Mucosa of descending colon (tissue), 3 donors: ENCODE measurements at regions of chr4 and their contacts with region 1.

Region 1: DNA sequence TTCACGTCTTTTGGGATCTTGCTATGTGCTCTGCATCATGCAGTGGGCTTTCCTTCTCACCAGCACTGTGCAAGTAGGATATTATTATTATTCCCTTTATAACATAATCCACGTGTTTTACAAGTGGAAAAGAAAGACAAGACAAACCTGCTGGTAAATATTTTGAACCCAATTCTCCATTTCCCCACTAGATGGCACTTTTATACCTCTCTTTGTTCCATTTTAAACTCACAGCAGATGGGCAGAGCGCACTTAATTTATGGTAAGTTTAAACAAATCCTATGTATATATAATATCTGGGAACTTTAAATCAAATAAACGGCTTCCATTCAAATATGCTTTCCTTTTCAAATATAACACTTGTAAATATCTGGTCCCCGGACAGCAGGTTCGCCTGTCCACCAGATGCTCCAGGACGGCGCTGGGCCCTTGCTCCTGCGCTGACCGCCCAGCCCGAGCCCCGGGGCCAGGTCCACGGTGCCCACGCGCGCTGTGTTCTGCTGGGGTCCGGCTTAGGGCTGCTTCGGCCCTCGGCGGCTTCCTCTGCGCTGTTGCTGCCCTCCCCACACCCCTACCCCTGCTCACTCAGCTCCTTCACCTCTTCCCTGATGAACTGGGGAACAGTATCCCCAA is 31.1 kb downstream of the F11 start:
- DNase-seq: peak in 2 of 3 donors; percentile 32 to 33
- ATAC-seq: peak; percentile 64
- H3K4me3 ChIP-seq: no peak overlapping the region
- H3K4me1 ChIP-seq: peaks cover 9% of the 10 kb centered on the region
- CTCF ChIP-seq: peak; percentile 46

Region 2: GRCh38 chr4:186587416-186588018 is 290.4 kb after region 1 on chr4:
- intact Hi-C with region 1: loop called (anchors 5 to 10 kb)
- DNase-seq: peak in 2 of 3 donors; percentile 71 to 92
- ATAC-seq: peak; percentile 80
- H3K4me3 ChIP-seq: no peak overlapping the region
- H3K4me1 ChIP-seq: no peaks in the 10 kb centered on the region
- CTCF ChIP-seq: peak; percentile 56

Region 3: GRCh38 chr4:186592966-186593586 is 295.9 kb after region 1 on chr4:
- intact Hi-C with region 1: loop called (anchors 5 to 10 kb)
- DNase-seq: no peak
- ATAC-seq: peak; percentile 71
- H3K4me3 ChIP-seq: no peak overlapping the region
- H3K4me1 ChIP-seq: no peaks in the 10 kb centered on the region
- CTCF ChIP-seq: no peak